ENCODE measurements at regions of chr11 and their contacts with region 1.

Region 1: GRCh38 chr11:19071255-19071654 is 10.7 kb upstream of the MRGPRX2 start:
- DNase-seq: peak; percentile 83 to 84
- H3K4me3 ChIP-seq: no peak overlapping the region
- H3K4me3 Mint-ChIP-seq: peak overlapping the region; percentile 29
- H3K27ac Mint-ChIP-seq: no peak overlapping the region
- H3K4me1 ChIP-seq: no peaks in the 10 kb centered on the region; the same call in 1 of the 2 replicates
- H3K4me1 Mint-ChIP-seq: peaks cover 15% of the 10 kb centered on the region
- H3K27me3 ChIP-seq: no peaks in the 10 kb centered on the region
- H3K27me3 Mint-ChIP-seq: peaks cover 8% of the 10 kb centered on the region
- CTCF ChIP-seq: peak; percentile 99

Region 2: GRCh38 chr11:19013181-19013857 is 57.9 kb before region 1 on chr11:
- CTCF ChIA-PET with region 1: no interaction called
- POLR2A ChIA-PET with region 1: no interaction called
- intact Hi-C with region 1: no loop called
- DNase-seq: no peak
- H3K4me3 ChIP-seq: no peak overlapping the region
- H3K4me3 Mint-ChIP-seq: no peak overlapping the region
- H3K27ac Mint-ChIP-seq: peak overlapping the region; percentile 53
- H3K4me1 ChIP-seq: peaks cover 12% of the 10 kb centered on the region; the same call in 1 of the 2 replicates
- H3K4me1 Mint-ChIP-seq: peaks cover 13% of the 10 kb centered on the region
- H3K27me3 ChIP-seq: no peaks in the 10 kb centered on the region
- H3K27me3 Mint-ChIP-seq: no peaks in the 10 kb centered on the region
- CTCF ChIP-seq: no peak

Region 3: DNA sequence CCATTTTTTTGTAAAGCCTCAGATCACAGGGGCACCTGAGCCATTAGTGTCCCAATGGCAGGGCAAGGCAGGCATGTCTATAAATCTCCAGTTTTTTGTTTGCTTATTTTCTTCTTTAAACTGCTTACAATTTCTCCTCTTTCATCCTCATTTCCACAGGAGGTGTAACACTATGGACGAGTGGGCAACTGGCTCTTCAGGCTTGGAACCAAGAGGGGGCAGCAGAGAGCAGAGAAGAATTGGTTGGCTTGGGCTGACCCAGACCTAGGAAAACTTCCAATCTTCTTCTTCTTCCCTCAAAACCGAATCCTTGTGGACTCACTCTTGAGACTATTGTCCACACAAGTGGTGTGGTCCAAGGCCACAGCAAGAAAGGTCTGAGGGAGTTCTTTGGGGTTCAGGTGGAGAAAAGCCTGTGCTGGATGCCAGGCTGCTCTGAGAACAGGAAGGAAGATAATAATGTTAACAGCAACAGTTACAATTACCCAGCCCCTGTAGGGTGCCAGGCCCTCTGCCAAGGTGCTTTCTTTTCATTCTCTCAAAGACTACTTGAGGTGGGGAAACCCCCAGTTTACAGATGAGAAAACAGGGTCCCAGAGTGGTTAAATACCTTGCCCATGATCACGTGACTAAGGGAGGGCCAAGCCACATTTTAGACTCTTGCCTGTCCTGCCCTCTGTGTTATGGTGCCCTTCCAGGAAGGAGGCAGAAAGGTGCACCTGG is 240.2 kb after region 1 on chr11:
- CTCF ChIA-PET with region 1: no interaction called
- POLR2A ChIA-PET with region 1: no interaction called
- intact Hi-C with region 1: loop called (anchors 1 kb)
- DNase-seq: peak; percentile 56 to 83
- H3K4me3 ChIP-seq: no peak overlapping the region
- H3K4me3 Mint-ChIP-seq: no peak overlapping the region
- H3K27ac Mint-ChIP-seq: no peak overlapping the region
- H3K4me1 ChIP-seq: no peaks in the 10 kb centered on the region
- H3K4me1 Mint-ChIP-seq: no peaks in the 10 kb centered on the region
- H3K27me3 ChIP-seq: no peaks in the 10 kb centered on the region
- H3K27me3 Mint-ChIP-seq: no peaks in the 10 kb centered on the region
- CTCF ChIP-seq: peak; percentile 79 to 94

Measured in Caco-2 (cell line).